WTC11 (cell line): ENCODE measurements at regions of chr5 and their contacts with region 1.

Region 1: DNA sequence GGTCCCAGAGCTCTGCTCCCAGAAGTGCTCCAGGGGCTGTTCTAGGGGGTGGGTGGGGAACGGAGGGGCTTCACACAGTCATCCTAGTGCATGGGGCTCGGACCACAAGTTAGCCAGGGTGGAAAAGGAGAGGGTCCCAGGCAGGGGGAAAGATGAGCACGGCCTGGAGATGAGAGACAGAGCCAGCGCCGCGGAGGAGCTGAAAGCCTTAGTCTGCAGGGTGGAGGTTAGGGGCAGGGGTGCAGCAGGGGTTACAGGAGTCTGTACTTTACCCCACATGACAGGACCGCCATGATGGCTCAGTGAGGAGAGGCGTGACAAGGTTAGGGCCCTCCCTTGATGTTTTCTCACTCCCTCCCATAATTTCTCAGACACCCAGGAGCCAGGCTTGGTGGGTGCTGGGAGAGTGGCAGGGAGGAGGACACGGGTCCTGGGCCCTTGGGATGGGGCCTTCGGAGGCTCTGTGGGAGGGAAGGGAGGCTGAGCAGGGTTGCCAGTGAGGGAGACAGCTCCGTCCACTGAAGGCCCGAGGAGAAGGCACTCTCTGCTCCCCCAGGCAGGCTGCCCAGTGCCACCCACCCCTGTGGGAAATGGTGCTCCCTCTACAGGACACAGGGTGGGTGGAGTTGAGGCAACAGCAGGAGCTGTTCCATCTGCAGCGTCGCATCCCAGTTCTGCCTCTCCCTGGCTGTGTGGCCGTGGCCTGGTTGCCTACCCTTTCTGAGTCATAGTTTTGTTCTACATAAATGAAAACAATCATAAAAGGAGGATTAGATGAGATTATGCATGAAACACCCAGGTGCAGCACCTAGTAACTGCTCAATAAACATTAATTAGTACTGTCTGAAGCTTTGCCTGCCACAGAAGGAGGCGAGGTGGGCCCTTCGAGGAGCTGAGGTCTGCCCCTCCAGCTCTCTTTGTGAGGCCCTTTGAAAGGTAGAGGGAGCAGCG is 66.2 kb downstream of the NDST1 start:
- DNase-seq: no peak
- ATAC-seq: peak; percentile 80
- H3K4me3 Mint-ChIP-seq: no peak overlapping the region
- H3K27ac Mint-ChIP-seq: no peak overlapping the region
- H3K4me1 Mint-ChIP-seq: no peaks in the 10 kb centered on the region
- H3K27me3 Mint-ChIP-seq: no peaks in the 10 kb centered on the region
- CTCF ChIP-seq: no peak

Region 2: DNA sequence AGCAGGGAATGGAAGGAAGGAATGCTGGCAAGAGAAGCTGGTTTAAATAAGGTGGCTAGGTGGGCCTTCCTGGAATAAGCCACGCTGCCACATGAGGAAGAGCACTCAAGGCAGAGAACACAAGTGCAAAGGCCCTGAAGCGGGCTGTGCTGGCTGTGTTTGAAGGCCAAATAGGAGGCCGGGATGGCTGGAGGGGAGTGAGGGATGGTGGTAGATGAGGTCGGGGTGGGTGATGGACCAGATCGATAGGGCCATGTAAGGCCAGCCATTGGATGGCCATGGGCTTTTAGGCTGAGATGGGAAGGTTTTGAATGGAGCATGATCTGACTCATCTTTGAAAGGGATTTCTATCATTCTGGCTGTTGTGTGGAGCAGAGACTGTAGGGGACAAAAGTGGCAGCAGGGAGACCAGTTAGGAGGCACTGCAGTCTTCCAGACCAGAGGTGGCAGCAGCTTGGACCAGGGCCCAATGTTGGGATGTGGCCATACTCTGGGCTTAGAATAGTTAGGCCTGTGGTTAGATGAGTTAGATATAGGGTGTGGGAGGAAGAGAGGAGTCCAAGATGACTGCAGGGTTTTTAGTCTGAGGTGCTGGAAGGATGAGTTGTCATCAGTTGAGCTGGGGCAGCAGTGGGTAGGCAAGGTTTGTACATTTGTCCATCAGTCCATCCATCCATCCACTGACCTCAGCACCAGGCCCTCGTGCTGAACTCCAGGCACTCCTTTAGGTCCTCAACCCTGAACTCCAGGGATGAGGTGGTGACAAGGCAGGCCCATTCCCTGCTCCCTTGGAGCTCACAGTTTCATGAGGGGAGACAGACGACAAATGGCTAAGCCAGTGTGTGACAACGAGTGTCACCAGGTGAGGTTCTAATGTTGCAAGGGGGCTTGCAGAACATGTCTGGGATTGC is 35.9 kb before region 1 on chr5:
- CTCF ChIA-PET with region 1: no interaction called
- POLR2A ChIA-PET with region 1: no interaction called
- DNase-seq: no peak
- ATAC-seq: no peak
- H3K4me3 Mint-ChIP-seq: no peak overlapping the region
- H3K27ac Mint-ChIP-seq: peak overlapping the region; percentile 23
- H3K4me1 Mint-ChIP-seq: peaks cover 5% of the 10 kb centered on the region
- H3K27me3 Mint-ChIP-seq: no peaks in the 10 kb centered on the region
- CTCF ChIP-seq: no peak

Region 3: DNA sequence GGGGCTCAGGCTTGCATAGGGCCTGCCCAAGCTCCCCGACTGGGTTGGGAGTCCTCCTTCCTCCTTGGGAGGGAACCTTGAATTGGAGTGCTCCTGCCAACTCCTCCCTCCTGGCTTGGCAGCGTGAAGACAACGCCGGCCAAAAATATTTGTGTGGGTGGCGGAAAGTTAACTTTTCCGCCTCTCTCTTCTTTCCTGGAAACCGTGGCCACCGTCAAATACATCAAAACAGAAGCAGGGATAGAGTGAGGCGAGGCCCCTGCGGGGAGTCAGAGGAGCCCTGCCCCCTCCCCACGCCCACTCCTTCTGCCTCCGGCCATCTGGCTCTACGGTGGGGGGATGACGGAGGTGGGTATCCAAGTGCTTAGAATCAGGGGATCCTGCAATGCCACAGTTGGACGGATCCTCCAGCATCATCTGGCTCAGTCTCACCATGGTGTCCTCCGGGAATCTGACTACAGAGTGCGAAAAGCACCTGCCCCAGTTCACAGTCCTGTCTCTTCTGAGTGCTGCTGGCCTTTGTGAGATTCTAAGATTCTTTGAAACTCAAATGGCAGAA is 41.1 kb after region 1 on chr5:
- CTCF ChIA-PET with region 1: interaction called, 18 read pairs
- POLR2A ChIA-PET with region 1: no interaction called
- DNase-seq: no peak
- ATAC-seq: no peak
- H3K4me3 Mint-ChIP-seq: no peak overlapping the region
- H3K27ac Mint-ChIP-seq: no peak overlapping the region
- H3K4me1 Mint-ChIP-seq: peaks cover 15% of the 10 kb centered on the region
- H3K27me3 Mint-ChIP-seq: no peaks in the 10 kb centered on the region
- CTCF ChIP-seq: no peak

Region 4: GRCh38 chr5:150645077-150645700 is 71.0 kb after region 1 on chr5:
- CTCF ChIA-PET with region 1: interaction called, 11 read pairs
- POLR2A ChIA-PET with region 1: no interaction called
- DNase-seq: no peak
- ATAC-seq: no peak; the same call in 1 of the 2 replicates
- H3K4me3 Mint-ChIP-seq: no peak overlapping the region
- H3K27ac Mint-ChIP-seq: no peak overlapping the region
- H3K4me1 Mint-ChIP-seq: peaks cover 32% of the 10 kb centered on the region
- H3K27me3 Mint-ChIP-seq: no peaks in the 10 kb centered on the region
- CTCF ChIP-seq: no peak

Region 5: DNA sequence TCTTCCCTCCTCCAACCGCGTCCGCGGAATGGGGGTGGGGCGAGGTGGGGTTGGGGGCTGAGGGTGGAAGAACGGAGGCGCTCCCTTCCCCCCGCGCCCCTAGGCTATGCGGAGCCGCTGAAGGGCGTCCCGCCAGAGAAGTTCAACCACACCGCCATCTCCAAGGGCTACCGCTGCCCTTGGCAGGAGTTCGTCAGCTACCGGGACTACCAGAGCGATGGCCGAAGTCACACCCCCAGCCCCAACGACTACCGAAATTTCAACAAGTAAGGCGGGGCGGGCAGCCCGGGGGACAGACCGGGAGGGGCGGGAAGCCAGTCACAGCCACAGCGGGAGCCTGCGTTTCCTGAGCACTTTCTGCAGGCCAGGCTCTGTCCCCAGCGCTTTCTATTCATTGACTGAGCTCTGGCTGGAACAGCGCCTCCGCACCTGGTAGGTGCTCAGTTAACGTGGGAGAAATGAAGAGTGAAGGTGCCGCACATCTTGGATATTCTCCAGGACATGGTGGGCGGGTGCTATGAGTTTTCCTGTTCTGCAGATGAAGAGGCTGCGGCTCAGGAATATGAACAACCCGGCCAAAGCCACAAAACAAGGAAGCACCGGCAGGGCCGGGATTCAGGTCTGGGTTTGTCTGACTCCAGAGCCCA is 98.2 kb after region 1 on chr5:
- CTCF ChIA-PET with region 1: interaction called, 10 read pairs
- POLR2A ChIA-PET with region 1: no interaction called
- DNase-seq: peak; percentile 85
- ATAC-seq: peak; percentile 73
- H3K4me3 Mint-ChIP-seq: peak overlapping the region; percentile 84
- H3K27ac Mint-ChIP-seq: peak overlapping the region; percentile 96
- H3K4me1 Mint-ChIP-seq: peaks cover 31% of the 10 kb centered on the region
- H3K27me3 Mint-ChIP-seq: no peaks in the 10 kb centered on the region
- CTCF ChIP-seq: no peak